CD8-positive, alpha-beta memory T cell (primary cell): ENCODE measurements at regions of chr19 and their contacts with region 1.

Region 1: GRCh38 chr19:52189735-52190486 is at the start of gene PPP2R1A:
- DNase-seq: peak; percentile 98 to 100 (median 98)
- H3K4me3 ChIP-seq: peak within 1 kb of the TSS; percentile 92
- H3K4me3 Mint-ChIP-seq: peak within 1 kb of the TSS; percentile 84 to 99 (median 96)
- H3K27ac ChIP-seq: peak within 1 kb of the TSS; percentile 98
- H3K27ac Mint-ChIP-seq: peak within 1 kb of the TSS; percentile 91 to 100 (median 100)
- H3K4me1 ChIP-seq: peaks cover 47% of the 10 kb centered on the region
- H3K4me1 Mint-ChIP-seq: peaks cover 42 to 54% (median 52%) of the 10 kb centered on the region in 3 donors
- H3K27me3 ChIP-seq: no peaks in the 10 kb centered on the region
- H3K27me3 Mint-ChIP-seq: peaks cover 0 to 3% of the 10 kb centered on the region in 2 donors
- total RNA-seq, gene PPP2R1A: 232 to 250 TPM

Region 2: DNA sequence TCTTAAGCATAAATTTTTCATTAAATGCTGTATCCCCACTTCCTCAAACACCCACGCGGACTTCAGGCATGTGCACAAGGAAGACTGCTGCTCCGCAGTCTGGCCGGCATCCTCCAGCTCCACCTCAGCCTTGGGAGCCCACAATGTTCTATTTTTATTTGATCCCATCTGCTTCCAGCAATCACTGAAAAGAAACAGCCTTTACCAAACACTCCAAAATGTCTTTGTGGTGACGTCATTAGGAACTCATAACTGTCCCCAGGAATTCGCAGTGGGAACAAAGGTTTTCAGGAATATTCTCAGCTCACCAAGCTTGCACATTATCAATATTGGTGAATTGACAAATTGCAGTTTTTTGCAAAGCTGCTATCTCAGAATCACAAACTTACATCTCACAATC is 79.2 kb before region 1 on chr19:
- CTCF ChIA-PET with region 1: no interaction called
- POLR2A ChIA-PET with region 1: interaction called, 12 read pairs
- DNase-seq: no peak
- H3K4me3 ChIP-seq: no peak overlapping the region
- H3K4me3 Mint-ChIP-seq: no peak overlapping the region
- H3K27ac ChIP-seq: no peak overlapping the region
- H3K27ac Mint-ChIP-seq: no peak overlapping the region
- H3K4me1 ChIP-seq: no peaks in the 10 kb centered on the region
- H3K4me1 Mint-ChIP-seq: no peaks in the 10 kb centered on the region
- H3K27me3 ChIP-seq: no peaks in the 10 kb centered on the region
- H3K27me3 Mint-ChIP-seq: peaks cover 0 to 2% of the 10 kb centered on the region in 2 donors

Region 3: DNA sequence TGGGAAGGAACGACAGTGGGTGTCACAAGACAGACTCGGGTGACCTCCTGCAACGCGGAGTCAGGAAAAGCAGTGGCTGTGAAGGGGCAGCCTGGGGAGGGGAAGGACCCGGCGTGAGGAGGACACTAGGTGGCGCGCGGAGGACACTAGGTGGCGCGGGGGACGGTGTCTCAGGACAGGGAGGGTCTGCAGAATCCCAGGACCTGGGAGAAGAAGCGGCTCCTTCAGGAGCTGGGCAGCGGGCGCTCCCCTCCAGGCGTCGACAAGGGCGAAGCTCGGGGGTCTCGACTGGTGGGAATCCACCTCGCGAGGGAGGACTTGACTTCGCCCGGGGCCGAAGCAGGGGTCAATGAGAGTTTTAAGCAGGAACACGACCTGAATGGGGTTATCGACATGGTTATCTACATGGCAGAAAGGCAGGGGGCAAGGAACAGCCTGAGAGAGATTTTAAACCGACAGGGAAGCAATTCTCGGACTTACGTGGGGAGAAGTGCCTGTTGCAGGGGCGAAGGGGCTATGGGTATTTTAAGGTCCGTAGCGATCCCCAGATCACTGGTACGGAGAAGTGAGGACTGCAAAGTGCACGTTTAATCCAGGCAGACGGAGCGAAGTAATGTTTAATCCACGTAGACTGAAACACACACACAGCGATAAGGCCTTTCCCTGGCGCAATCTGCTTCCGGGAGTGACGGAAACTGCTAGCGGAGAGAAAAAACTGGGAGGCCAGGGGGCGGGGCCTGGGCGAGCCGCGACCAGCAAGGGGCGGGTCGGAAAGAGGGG is 50.5 kb before region 1 on chr19 and contains the start of gene ZNF616:
- CTCF ChIA-PET with region 1: interaction called, 8 read pairs
- POLR2A ChIA-PET with region 1: interaction called, 23 read pairs
- DNase-seq: peak; percentile 63 to 98 (median 96)
- H3K4me3 ChIP-seq: peak within 1 kb of the TSS; percentile 100
- H3K4me3 Mint-ChIP-seq: peak within 1 kb of the TSS; percentile 90 to 99 (median 96)
- H3K27ac ChIP-seq: peak within 1 kb of the TSS; percentile 91
- H3K27ac Mint-ChIP-seq: peak within 1 kb of the TSS; percentile 79 to 99 (median 94)
- H3K4me1 ChIP-seq: peaks cover 22% of the 10 kb centered on the region
- H3K4me1 Mint-ChIP-seq: peaks cover 34 to 45% (median 36%) of the 10 kb centered on the region in 3 donors
- H3K27me3 ChIP-seq: no peaks in the 10 kb centered on the region
- H3K27me3 Mint-ChIP-seq: peaks cover 0 to 1% of the 10 kb centered on the region in 2 donors
- total RNA-seq, gene ZNF616: 11.2 to 12.6 TPM

Region 4: DNA sequence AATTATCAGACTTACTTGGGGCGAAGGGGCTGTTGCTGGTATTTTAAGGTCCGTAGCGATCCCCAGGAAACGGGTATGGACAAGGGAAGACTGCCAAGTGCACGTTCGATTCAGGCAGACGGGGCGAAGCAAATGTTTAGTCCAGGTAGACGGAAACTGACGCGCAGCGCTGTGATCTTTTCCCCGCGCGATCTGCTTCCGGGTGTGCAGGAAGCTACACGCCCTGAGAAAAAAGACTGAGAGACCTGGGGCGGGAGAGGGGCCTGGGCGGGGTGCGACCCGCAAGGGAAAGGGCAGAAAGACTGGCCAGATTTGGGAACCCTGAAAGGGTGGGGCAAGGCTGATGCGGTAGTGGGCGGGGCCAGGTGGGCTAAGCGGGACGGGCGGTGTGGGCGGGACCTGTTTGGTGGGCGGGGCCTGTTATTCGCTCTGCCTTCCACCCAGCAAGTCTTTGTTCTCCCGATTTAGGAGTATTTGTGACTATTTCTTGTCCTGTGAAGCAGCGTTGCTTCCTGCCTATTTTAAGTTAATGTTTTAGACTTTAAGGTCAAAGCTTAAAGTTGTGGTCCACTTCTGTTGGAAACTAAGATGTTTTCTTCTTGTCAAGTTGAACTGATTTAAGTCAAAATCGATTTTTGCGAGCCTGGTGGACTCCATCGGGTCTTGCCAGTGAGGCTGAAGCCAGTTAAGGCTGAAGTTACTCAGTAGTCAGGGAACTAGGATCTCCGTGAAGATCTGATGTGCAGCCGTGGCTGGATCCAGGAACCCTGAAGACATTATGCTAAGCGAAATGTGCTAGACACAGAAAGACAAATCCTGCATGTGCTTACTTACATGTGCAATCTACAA is 18.4 kb before region 1 on chr19 and contains the start of gene ZNF836:
- CTCF ChIA-PET with region 1: interaction called, 9 read pairs
- POLR2A ChIA-PET with region 1: interaction called, 31 read pairs
- DNase-seq: peak; percentile 90 to 92 (median 91)
- H3K4me3 ChIP-seq: peak within 1 kb of the TSS; percentile 94
- H3K4me3 Mint-ChIP-seq: peak within 1 kb of the TSS; percentile 91 to 100 (median 95)
- H3K27ac ChIP-seq: peak within 1 kb of the TSS; percentile 82
- H3K27ac Mint-ChIP-seq: peak within 1 kb of the TSS; percentile 93 to 100 (median 96)
- H3K4me1 ChIP-seq: peaks cover 25% of the 10 kb centered on the region
- H3K4me1 Mint-ChIP-seq: peaks cover 38 to 46% (median 41%) of the 10 kb centered on the region in 3 donors
- H3K27me3 ChIP-seq: no peaks in the 10 kb centered on the region
- H3K27me3 Mint-ChIP-seq: peaks cover 0 to 3% of the 10 kb centered on the region in 2 donors
- total RNA-seq, gene ZNF836: 10.6 to 12.5 TPM

Region 5: DNA sequence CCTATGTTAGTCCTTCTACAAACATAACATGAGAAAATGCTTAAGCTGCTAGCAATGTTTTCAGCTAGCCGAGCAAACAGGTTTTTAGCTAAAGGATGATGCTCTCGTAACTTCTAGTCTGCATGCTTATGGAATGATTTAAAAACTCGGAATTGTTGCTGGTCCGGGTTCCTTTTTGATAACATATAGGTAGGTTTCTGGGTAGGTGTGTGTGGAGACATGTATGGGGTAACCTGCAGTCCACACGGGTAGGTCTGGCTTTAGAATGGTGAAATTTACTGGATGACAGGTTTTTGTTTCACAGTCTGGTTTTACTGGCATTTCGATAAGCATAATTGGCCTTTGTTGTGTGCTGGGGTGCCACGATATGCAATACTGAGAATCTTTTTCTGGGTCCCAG is 1282.0 kb after region 1 on chr19:
- CTCF ChIA-PET with region 1: no interaction called
- POLR2A ChIA-PET with region 1: no interaction called
- DNase-seq: no peak
- H3K4me3 ChIP-seq: no peak overlapping the region
- H3K4me3 Mint-ChIP-seq: peak overlapping the region in 1 of 7 donors; percentile 25
- H3K27ac ChIP-seq: no peak overlapping the region
- H3K27ac Mint-ChIP-seq: no peak overlapping the region
- H3K4me1 ChIP-seq: no peaks in the 10 kb centered on the region
- H3K4me1 Mint-ChIP-seq: peaks cover 31 to 49% (median 32%) of the 10 kb centered on the region in 3 donors
- H3K27me3 ChIP-seq: no peaks in the 10 kb centered on the region
- H3K27me3 Mint-ChIP-seq: no peaks in the 10 kb centered on the region